AG04449 (cell line): ENCODE measurements at regions of chr6 and their contacts with region 1.

Region 1: GRCh38 chr6:30877419-30878371 is 6.6 kb upstream of the DDR1 start:
- DNase-seq: peak; percentile 62
- H3K4me3 ChIP-seq: peak overlapping the region; percentile 39
- CTCF ChIP-seq: peak; percentile 85

Region 2: GRCh38 chr6:30722280-30723112 is 155.2 kb before region 1 on chr6:
- CTCF ChIA-PET with region 1: interaction called, 13 read pairs
- POLR2A ChIA-PET with region 1: interaction called, 6 read pairs
- DNase-seq: no peak
- H3K4me3 ChIP-seq: peak overlapping the region; percentile 97
- CTCF ChIP-seq: peak; percentile 83

Region 3: GRCh38 chr6:30828027-30828960 is 49.4 kb before region 1 on chr6:
- CTCF ChIA-PET with region 1: interaction called, 472 read pairs
- POLR2A ChIA-PET with region 1: interaction called, 3 read pairs
- DNase-seq: peak; percentile 70
- H3K4me3 ChIP-seq: no peak overlapping the region
- CTCF ChIP-seq: peak; percentile 90

Region 4: GRCh38 chr6:30844091-30844535 is 33.6 kb before region 1 on chr6:
- CTCF ChIA-PET with region 1: interaction called, 24 read pairs
- POLR2A ChIA-PET with region 1: no interaction called
- DNase-seq: no peak
- H3K4me3 ChIP-seq: no peak overlapping the region
- CTCF ChIP-seq: no peak

Region 5: GRCh38 chr6:30857549-30857948 is 20.1 kb before region 1 on chr6:
- CTCF ChIA-PET with region 1: interaction called, 26 read pairs
- POLR2A ChIA-PET with region 1: no interaction called
- DNase-seq: no peak
- H3K4me3 ChIP-seq: no peak overlapping the region
- CTCF ChIP-seq: no peak

Region 6: GRCh38 chr6:30907758-30908591 is 30.3 kb after region 1 on chr6 and contains the start of gene GTF2H4:
- CTCF ChIA-PET with region 1: interaction called, 10 read pairs
- POLR2A ChIA-PET with region 1: no interaction called
- DNase-seq: peak; percentile 86
- H3K4me3 ChIP-seq: peak within 1 kb of the TSS; percentile 89
- CTCF ChIP-seq: no peak